Activated CD4-positive, alpha-beta T cell treated with anti-CD3 and anti-CD28 coated beads, Interleukin-2, amount 10 ng/mL, durations not matched to agents 7 days and 5 days (primary cell): ENCODE measurements at regions of chr14 and their contacts with region 1.

Region 1: DNA sequence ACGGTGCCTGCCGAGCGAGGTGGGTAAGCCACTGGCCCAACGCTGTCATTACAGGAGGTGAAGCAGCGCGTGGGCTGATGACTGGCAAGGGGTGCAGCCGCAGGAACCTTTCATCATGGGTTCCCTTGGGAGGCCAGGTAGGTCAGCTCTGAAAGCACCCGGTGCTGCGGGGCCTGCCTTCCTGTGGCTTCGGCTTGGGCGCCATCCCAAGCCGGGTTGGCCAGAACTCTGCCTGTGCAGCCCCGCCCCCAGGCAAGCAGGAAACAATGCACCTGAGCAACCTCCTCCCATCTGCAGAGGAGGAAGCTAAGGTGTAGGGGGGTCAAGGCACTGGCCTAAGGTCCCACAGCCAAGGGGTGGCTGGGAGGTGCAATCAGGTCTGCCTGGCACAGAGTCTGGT is 20.0 kb upstream of the HHIPL1 start:
- DNase-seq: no peak
- H3K4me3 Mint-ChIP-seq: no peak overlapping the region
- H3K27ac Mint-ChIP-seq: no peak overlapping the region
- H3K4me1 Mint-ChIP-seq: peaks cover 4% of the 10 kb centered on the region
- H3K27me3 Mint-ChIP-seq: peaks cover 3% of the 10 kb centered on the region

Region 2: GRCh38 chr14:99747582-99748330 is 122.8 kb after region 1 on chr14:
- CTCF ChIA-PET with region 1: no interaction called
- POLR2A ChIA-PET with region 1: interaction called, 10 read pairs
- DNase-seq: no peak
- H3K4me3 Mint-ChIP-seq: no peak overlapping the region
- H3K27ac Mint-ChIP-seq: no peak overlapping the region
- H3K4me1 Mint-ChIP-seq: peaks cover 18% of the 10 kb centered on the region
- H3K27me3 Mint-ChIP-seq: peaks cover 14% of the 10 kb centered on the region